ENCODE measurements at regions of chr3 and their contacts with region 1.

Region 1: DNA sequence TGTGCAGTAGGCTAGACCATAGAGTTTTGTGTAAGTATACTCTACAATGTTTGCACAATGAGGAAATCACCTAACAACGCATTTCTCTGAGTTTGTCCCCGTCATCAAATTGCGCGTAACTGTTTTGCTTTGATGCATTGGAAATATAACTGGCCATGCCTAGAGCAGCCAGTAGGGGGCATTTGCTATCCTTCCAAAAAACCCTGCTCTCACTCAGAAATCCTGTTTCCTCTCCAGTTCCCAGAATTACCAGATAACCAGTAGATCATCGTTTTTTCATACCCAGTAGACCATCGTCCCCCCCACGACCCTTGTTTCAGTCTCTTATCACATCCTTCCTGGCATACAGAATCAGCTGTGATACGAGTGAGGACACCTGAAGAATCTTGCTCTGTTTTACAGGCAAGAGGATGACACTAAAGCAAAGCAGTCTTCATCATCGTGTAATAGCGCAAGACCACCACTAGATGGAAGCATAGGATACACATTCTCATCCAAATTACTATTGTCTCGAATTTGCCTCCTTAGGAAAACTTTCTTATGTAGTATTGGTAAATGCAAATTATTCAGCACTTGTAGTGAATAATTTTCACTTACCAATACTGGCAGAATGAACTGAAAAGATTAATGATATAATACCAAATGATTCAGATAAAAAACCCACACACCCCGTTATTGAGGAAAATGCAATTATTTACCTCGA is 4.4 kb upstream of the GABRR3 start:
- DNase-seq: peak in 1 of 2 donors; percentile 58
- ATAC-seq: peak; percentile 91
- H3K4me3 ChIP-seq: no peak overlapping the region
- H3K27ac ChIP-seq: no peak overlapping the region
- H3K4me1 ChIP-seq: no peaks in the 10 kb centered on the region
- H3K27me3 ChIP-seq: no peaks in the 10 kb centered on the region

Region 2: DNA sequence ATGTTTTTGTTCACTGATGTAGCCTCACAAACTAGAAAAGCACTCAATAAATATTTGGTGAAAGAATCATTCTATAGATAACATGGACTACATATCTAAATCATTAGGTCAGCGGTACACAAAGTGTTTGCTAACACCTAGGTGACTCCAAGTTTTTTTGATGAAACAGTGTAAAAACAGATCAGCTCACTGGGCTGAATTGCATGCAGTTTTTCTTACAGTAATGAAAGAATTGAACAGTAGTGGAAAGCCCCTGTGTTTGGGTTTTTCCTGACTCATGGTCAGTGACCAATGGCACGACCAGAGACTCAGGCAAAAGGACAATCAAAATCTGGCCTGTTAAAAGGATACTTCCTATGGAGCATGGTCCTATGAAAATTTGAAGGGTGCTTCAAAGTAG is 1609.4 kb before region 1 on chr3:
- intact Hi-C with region 1: no loop called
- DNase-seq: no peak
- ATAC-seq: no peak
- H3K4me3 ChIP-seq: no peak overlapping the region
- H3K27ac ChIP-seq: no peak overlapping the region
- H3K4me1 ChIP-seq: no peaks in the 10 kb centered on the region
- H3K27me3 ChIP-seq: no peaks in the 10 kb centered on the region

Region 3: DNA sequence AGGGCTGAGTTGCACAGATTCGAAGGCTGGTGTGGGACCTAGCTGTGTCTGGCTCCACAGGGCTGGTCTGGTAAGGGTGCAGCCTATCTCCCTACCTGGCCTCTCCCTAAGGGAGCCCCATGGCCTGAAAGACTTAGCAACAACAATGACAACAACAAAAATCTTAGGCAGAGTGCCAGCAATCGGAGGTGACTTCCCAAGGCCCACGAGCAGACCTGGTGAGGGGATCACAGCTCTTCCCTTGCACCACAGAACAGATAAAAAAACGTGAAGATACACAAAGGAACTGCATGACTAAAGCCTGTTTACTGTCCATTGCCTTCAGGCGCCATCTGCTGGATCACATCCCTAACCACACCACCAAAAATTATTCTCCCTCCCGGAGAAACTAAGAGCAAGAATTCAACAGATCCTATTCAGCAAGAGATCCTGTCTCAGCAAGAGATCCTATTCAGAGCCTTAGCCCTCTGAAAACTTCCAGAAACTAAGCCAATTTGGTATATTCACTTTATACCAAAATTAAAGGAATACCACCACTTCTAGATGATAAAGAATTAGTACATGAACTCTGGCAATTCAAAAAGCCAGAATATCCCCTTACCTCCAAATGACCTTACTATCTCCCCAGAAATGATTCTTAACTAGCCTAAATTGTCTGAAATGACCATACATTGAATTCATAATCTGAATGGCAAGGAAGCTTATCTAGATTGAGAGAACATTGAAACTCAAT is 290.1 kb after region 1 on chr3:
- intact Hi-C with region 1: loop called (anchors 5 to 10 kb)
- DNase-seq: no peak
- ATAC-seq: no peak
- H3K4me3 ChIP-seq: no peak overlapping the region
- H3K27ac ChIP-seq: no peak overlapping the region
- H3K4me1 ChIP-seq: no peaks in the 10 kb centered on the region
- H3K27me3 ChIP-seq: no peaks in the 10 kb centered on the region

Measured in aorta (tissue), 5 donors.